ENCODE measurements at regions of chr1 and their contacts with region 1.

Region 1: DNA sequence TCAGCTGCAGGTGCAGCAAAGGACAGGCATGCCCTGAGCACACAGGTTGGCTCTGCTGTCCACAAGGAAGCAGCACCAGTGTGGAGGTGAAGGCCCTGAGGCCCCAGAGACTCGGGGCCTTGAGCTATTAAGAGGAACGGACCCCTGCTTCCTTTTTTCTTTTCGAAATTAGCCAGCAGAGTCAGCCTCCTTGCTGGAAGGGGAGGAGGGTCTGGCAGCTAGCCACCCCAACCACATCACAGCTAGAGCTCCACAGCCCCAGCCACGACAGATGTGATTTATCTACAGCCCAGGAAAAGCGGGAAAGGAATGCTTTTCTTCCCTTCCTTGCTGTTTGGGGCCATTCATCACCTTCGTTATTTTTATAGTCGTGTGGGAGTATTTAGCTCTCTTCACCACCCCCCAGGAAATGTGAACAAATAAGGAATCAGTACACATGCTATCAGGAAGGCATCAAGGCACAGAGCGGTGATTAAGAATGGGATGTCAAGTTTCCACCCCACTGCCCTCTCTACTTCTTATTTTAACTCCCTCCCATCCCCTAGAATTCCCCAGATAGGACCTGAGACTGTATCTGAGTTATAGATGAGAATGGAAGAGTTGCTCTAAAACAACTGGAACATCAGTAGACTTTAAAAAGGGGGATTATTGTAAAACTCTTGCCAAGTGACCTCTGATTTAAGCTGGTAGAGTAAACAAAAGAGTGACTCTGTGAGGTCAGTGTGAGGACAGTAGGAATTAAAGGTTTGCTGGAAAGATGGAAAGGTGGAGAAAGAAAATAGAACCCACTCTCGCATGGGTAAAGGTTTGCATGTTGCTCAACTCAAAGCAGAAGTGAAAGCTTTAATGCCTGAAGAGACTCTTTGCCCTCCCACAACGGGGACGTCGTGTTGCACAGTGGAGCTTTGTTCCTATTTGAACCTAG is 224.7 kb upstream of the GJB5 start:
- DNase-seq: peak; percentile 73
- ATAC-seq: peak; percentile 89
- H3K4me3 ChIP-seq: peak overlapping the region; percentile 30; the same call in 1 of the 2 replicates
- H3K27ac ChIP-seq: peak overlapping the region; percentile 93
- H3K4me1 ChIP-seq: peaks cover 41% of the 10 kb centered on the region
- H3K27me3 ChIP-seq: no peaks in the 10 kb centered on the region
- CTCF ChIP-seq: no peak
- EP300 ChIP-seq: peak; percentile 13 to 57; a peak in 1 of 4 replicates
- POLR2A ChIP-seq: no peak
- RAD21 ChIP-seq: no peak

Region 2: DNA sequence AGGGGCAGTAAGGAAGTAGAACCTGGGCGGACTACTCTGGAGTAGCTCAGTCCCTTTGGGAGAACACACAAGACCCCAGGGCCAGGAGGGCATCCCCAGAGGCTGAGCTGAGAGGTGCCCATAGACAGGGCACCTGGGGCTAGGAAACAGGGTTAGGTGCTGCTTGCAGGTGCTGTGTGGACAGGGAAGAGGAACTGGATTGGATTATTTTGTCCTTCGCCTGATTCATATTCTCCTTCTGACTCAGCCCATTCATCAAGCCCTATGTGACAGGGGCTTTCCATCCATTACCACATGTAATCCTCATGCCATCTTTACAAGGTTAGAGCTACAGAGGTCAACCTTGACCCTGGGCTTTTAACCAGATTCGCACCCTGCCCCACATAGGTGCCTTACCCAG is 169.6 kb before region 1 on chr1:
- CTCF ChIA-PET with region 1: interaction called, 11 read pairs
- POLR2A ChIA-PET with region 1: interaction called, 4 read pairs
- RAD21 ChIA-PET with region 1: interaction called, 10 read pairs
- SMC1A ChIA-PET with region 1: interaction called, 9 read pairs
- in situ Hi-C with region 1: loop called (anchors 10 kb)
- intact Hi-C with region 1: loop called (anchors 2 kb)
- DNase-seq: peak; percentile 84
- ATAC-seq: peak; percentile 83
- H3K4me3 ChIP-seq: no peak overlapping the region
- H3K27ac ChIP-seq: peak overlapping the region; percentile 49
- H3K4me1 ChIP-seq: peaks cover 30% of the 10 kb centered on the region
- H3K27me3 ChIP-seq: no peaks in the 10 kb centered on the region
- CTCF ChIP-seq: no peak
- EP300 ChIP-seq: peak; percentile 81 to 97
- POLR2A ChIP-seq: no peak
- RAD21 ChIP-seq: no peak

Region 3: GRCh38 chr1:34460193-34460592 is 70.0 kb before region 1 on chr1:
- CTCF ChIA-PET with region 1: interaction called, 53 read pairs
- POLR2A ChIA-PET with region 1: interaction called, 4 read pairs
- RAD21 ChIA-PET with region 1: interaction called, 44 read pairs
- SMC1A ChIA-PET with region 1: interaction called, 37 read pairs
- in situ Hi-C with region 1: loop called (anchors 10 kb)
- intact Hi-C with region 1: loop called (anchors 5 kb)
- DNase-seq: peak; percentile 31
- ATAC-seq: peak; percentile 90
- H3K4me3 ChIP-seq: no peak overlapping the region
- H3K27ac ChIP-seq: no peak overlapping the region
- H3K4me1 ChIP-seq: no peaks in the 10 kb centered on the region; the same call in 1 of the 2 replicates
- H3K27me3 ChIP-seq: no peaks in the 10 kb centered on the region
- CTCF ChIP-seq: peak; percentile 74 to 84 (median 80)
- EP300 ChIP-seq: no peak
- POLR2A ChIP-seq: no peak
- RAD21 ChIP-seq: peak; percentile 80

Region 4: GRCh38 chr1:34549199-34549598 is 19.0 kb after region 1 on chr1:
- CTCF ChIA-PET with region 1: interaction called, 6 read pairs
- POLR2A ChIA-PET with region 1: no interaction called
- RAD21 ChIA-PET with region 1: interaction called, 4 read pairs
- SMC1A ChIA-PET with region 1: interaction called, 10 read pairs
- in situ Hi-C with region 1: no loop called
- intact Hi-C with region 1: no loop called
- DNase-seq: no peak
- ATAC-seq: no peak
- H3K4me3 ChIP-seq: no peak overlapping the region
- H3K27ac ChIP-seq: no peak overlapping the region
- H3K4me1 ChIP-seq: no peaks in the 10 kb centered on the region
- H3K27me3 ChIP-seq: no peaks in the 10 kb centered on the region
- CTCF ChIP-seq: peak; percentile 16 to 33 (median 17); a peak in 4 of 6 replicates
- EP300 ChIP-seq: no peak
- POLR2A ChIP-seq: no peak
- RAD21 ChIP-seq: no peak

Region 5: GRCh38 chr1:34597877-34598514 is 67.8 kb after region 1 on chr1:
- CTCF ChIA-PET with region 1: interaction called, 54 read pairs
- POLR2A ChIA-PET with region 1: interaction called, 4 read pairs
- RAD21 ChIA-PET with region 1: interaction called, 87 read pairs
- SMC1A ChIA-PET with region 1: interaction called, 104 read pairs
- in situ Hi-C with region 1: no loop called
- intact Hi-C with region 1: loop called (anchors 5 kb)
- DNase-seq: peak; percentile 41
- ATAC-seq: peak; percentile 96
- H3K4me3 ChIP-seq: no peak overlapping the region
- H3K27ac ChIP-seq: no peak overlapping the region
- H3K4me1 ChIP-seq: no peaks in the 10 kb centered on the region
- H3K27me3 ChIP-seq: no peaks in the 10 kb centered on the region
- CTCF ChIP-seq: peak; percentile 95 to 96 (median 96)
- EP300 ChIP-seq: no peak
- POLR2A ChIP-seq: no peak
- RAD21 ChIP-seq: peak; percentile 94